IMR-90 (cell line): ENCODE measurements at regions of chr6 and their contacts with region 1.

Region 1: DNA sequence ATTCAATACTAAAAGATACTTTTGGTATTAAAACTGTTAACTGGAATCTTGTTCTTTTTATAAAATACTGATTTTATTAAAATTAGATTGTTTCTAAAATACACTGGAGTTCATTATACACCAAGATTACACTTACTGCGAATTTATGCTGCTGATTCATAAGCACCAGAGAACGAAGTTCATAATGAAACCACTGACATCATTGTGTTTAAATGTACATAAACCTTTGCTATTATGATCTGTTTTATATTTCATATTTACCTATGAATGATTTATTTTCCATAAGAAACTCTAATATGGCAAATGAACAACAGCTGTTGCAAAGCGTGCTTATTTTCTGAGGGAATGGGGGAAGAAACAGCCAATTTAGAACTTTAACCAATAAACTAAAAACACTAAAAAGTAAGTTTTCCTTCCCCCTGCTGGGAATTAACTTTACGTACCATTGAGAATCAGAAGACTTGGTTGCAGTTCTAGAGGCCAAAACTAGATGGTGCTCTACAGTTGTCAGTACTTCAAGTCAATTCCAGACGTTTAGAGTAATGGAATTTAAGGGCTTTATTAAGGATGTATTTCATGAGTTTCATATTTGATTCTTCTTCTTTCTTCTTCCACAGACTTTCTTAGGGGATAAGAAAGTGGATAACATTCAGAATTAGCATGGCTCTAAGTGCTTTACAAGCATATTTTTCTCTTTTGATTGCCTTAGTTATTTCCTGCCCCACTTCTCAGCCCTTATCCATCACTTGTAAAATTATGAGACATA is 30.8 kb upstream of the COL19A1 start:
- DNase-seq: peak; percentile 76
- ATAC-seq: peak; percentile 91
- H3K4me3 ChIP-seq: no peak overlapping the region
- H3K27ac ChIP-seq: no peak overlapping the region
- H3K4me1 ChIP-seq: no peaks in the 10 kb centered on the region
- H3K27me3 ChIP-seq: no peaks in the 10 kb centered on the region; the same call in 1 of the 2 replicates
- CTCF ChIP-seq: peak; percentile 71
- POLR2A ChIP-seq: no peak
- RAD21 ChIP-seq: peak; percentile 49

Region 2: GRCh38 chr6:69871107-69871506 is 35.5 kb after region 1 on chr6:
- CTCF ChIA-PET with region 1: no interaction called
- POLR2A ChIA-PET with region 1: no interaction called
- dilution Hi-C with region 1: no loop called
- in situ Hi-C with region 1: no loop called
- intact Hi-C with region 1: no loop called
- DNase-seq: no peak
- ATAC-seq: no peak
- H3K4me3 ChIP-seq: no peak overlapping the region
- H3K27ac ChIP-seq: no peak overlapping the region
- H3K4me1 ChIP-seq: peaks cover 5% of the 10 kb centered on the region; the same call in 1 of the 2 replicates
- H3K27me3 ChIP-seq: peaks cover 29% of the 10 kb centered on the region
- CTCF ChIP-seq: no peak
- POLR2A ChIP-seq: no peak
- RAD21 ChIP-seq: no peak

Region 3: GRCh38 chr6:70166088-70166958 is 330.7 kb after region 1 on chr6:
- CTCF ChIA-PET with region 1: interaction called, 3 read pairs
- POLR2A ChIA-PET with region 1: no interaction called
- dilution Hi-C with region 1: no loop called
- in situ Hi-C with region 1: no loop called
- intact Hi-C with region 1: loop called (anchors 5 kb)
- DNase-seq: peak; percentile 15
- ATAC-seq: peak; percentile 89
- H3K4me3 ChIP-seq: no peak overlapping the region
- H3K27ac ChIP-seq: no peak overlapping the region
- H3K4me1 ChIP-seq: no peaks in the 10 kb centered on the region
- H3K27me3 ChIP-seq: no peaks in the 10 kb centered on the region
- CTCF ChIP-seq: peak; percentile 52
- POLR2A ChIP-seq: no peak
- RAD21 ChIP-seq: peak; percentile 51; the same call in 1 of the 2 replicates

Region 4: GRCh38 chr6:70839286-70840266 is 1004.0 kb after region 1 on chr6:
- CTCF ChIA-PET with region 1: no interaction called
- POLR2A ChIA-PET with region 1: no interaction called
- dilution Hi-C with region 1: no loop called
- in situ Hi-C with region 1: no loop called
- intact Hi-C with region 1: no loop called
- DNase-seq: peak; percentile 26
- ATAC-seq: no peak
- H3K4me3 ChIP-seq: no peak overlapping the region
- H3K27ac ChIP-seq: no peak overlapping the region
- H3K4me1 ChIP-seq: peaks cover 5% of the 10 kb centered on the region
- H3K27me3 ChIP-seq: no peaks in the 10 kb centered on the region
- CTCF ChIP-seq: no peak
- POLR2A ChIP-seq: no peak
- RAD21 ChIP-seq: no peak